ENCODE measurements at regions of chrX and their contacts with region 1.

Region 1: DNA sequence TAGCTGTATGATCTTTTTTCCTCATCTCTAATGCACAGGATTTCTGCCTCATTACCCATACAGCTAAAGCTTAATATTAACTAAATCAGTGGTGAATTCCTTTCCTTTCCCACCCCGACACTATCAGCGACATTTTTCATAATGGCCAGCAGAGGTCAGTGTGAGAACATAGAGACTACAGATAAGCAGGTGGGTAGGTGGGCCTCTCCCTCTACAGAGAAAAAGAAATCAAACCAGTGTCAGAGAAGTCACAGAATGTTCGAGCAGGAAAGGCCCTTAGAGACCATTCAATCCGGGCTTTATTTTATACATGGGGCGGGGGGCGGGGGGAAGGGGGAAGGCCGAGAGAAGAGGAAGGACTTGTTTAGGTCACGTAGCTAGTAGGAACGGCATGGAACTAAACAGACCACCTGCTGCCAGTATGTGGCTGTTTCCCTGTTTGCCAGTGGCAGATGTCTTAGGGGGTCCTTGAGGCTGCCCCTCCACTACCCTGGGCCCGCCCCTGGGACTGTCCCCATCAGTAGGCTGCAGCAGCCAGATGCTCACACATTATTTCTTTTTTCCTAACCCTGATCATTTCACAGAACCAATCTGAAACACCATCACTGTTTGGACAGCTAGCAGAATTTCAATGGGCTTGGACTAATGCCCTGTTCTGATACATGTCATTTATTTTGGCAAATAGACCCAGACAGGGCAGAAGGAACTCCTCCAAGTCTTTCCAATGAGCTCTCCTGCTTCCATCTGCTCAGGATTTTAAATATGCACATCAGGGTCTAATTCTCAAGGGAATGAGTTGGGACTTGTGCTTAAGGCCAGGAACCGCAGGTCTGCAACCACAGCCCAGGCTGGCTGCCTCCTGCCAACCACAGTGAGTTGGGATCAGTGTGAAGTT is 133.4 kb downstream of the ATG4A start:
- DNase-seq: no peak
- ATAC-seq: no peak
- H3K4me3 Mint-ChIP-seq: no peak overlapping the region
- H3K27ac Mint-ChIP-seq: no peak overlapping the region
- H3K4me1 Mint-ChIP-seq: no peaks in the 10 kb centered on the region
- H3K27me3 Mint-ChIP-seq: no peaks in the 10 kb centered on the region

Region 2: GRCh38 chrX:108257556-108257955 is 32.6 kb after region 1 on chrX:
- CTCF ChIA-PET with region 1: no interaction called
- POLR2A ChIA-PET with region 1: no interaction called
- intact Hi-C with region 1: no loop called
- DNase-seq: no peak
- ATAC-seq: no peak
- H3K4me3 Mint-ChIP-seq: no peak overlapping the region
- H3K27ac Mint-ChIP-seq: no peak overlapping the region
- H3K4me1 Mint-ChIP-seq: no peaks in the 10 kb centered on the region
- H3K27me3 Mint-ChIP-seq: peaks cover 13% of the 10 kb centered on the region

Region 3: GRCh38 chrX:108304210-108304609 is 79.2 kb after region 1 on chrX:
- CTCF ChIA-PET with region 1: no interaction called
- POLR2A ChIA-PET with region 1: no interaction called
- intact Hi-C with region 1: loop called in 1 of 2 experiments (anchors 5 kb)
- DNase-seq: no peak
- ATAC-seq: no peak
- H3K4me3 Mint-ChIP-seq: no peak overlapping the region
- H3K27ac Mint-ChIP-seq: no peak overlapping the region
- H3K4me1 Mint-ChIP-seq: no peaks in the 10 kb centered on the region
- H3K27me3 Mint-ChIP-seq: peaks cover 3% of the 10 kb centered on the region

Region 4: DNA sequence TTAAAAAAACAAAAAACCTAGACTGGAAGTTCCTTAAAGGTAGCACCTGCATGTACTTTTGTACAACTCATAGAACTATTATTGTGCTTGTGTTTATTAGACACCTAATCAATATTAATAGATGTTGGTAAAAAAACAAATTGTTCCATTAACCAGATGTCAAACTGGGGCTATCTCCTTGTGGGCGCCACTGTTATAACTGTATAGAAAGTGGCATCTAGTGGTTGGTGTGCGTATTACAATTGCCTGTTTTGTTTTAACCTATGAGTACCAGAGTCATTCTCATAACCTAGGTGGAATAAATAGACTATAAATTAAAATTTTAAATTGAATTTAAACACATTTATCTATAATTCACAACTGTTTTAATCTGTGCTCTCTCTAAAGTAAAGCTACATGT is 312.0 kb after region 1 on chrX:
- CTCF ChIA-PET with region 1: interaction called, 9 read pairs
- POLR2A ChIA-PET with region 1: no interaction called
- intact Hi-C with region 1: loop called (anchors 1 to 5 kb)
- DNase-seq: no peak
- ATAC-seq: no peak
- H3K4me3 Mint-ChIP-seq: no peak overlapping the region
- H3K27ac Mint-ChIP-seq: no peak overlapping the region
- H3K4me1 Mint-ChIP-seq: no peaks in the 10 kb centered on the region
- H3K27me3 Mint-ChIP-seq: no peaks in the 10 kb centered on the region